WTC11 (cell line): ENCODE measurements at regions of chr16 and their contacts with region 1.

Region 1: DNA sequence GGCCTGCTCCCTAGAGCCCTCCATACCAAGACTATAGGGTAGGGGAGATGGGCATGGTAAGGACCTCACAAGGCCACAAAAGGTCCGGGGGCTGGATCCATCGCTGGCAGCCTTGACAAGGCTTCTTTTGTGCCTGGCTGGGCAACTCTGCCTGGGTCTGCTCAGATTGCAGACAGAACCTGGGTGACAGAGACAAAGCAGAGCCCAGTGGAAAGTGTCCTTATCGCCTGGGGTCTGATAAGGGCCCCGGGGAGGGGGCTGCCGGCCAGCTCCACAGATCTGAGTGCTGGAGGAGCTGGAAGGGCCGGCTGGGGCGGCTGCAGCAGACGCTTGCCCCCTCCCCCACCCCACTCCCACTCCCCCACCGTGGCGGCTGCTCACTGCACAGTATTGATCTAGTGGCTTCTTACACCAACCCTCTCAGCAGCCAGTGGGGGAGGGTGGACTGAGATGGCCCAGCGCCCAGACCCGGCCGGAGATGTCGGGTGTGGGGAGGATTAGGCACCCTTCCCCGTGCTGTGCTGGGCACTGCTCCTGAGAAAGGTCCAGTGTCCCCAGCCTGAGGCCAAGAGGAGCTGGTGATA is 7.2 kb downstream of the MMP15 start:
- DNase-seq: no peak
- ATAC-seq: peak; percentile 2; the same call in 1 of the 2 replicates
- H3K4me3 Mint-ChIP-seq: no peak overlapping the region
- H3K27ac Mint-ChIP-seq: no peak overlapping the region
- H3K4me1 Mint-ChIP-seq: peaks cover 37% of the 10 kb centered on the region
- H3K27me3 Mint-ChIP-seq: no peaks in the 10 kb centered on the region
- CTCF ChIP-seq: no peak

Region 2: DNA sequence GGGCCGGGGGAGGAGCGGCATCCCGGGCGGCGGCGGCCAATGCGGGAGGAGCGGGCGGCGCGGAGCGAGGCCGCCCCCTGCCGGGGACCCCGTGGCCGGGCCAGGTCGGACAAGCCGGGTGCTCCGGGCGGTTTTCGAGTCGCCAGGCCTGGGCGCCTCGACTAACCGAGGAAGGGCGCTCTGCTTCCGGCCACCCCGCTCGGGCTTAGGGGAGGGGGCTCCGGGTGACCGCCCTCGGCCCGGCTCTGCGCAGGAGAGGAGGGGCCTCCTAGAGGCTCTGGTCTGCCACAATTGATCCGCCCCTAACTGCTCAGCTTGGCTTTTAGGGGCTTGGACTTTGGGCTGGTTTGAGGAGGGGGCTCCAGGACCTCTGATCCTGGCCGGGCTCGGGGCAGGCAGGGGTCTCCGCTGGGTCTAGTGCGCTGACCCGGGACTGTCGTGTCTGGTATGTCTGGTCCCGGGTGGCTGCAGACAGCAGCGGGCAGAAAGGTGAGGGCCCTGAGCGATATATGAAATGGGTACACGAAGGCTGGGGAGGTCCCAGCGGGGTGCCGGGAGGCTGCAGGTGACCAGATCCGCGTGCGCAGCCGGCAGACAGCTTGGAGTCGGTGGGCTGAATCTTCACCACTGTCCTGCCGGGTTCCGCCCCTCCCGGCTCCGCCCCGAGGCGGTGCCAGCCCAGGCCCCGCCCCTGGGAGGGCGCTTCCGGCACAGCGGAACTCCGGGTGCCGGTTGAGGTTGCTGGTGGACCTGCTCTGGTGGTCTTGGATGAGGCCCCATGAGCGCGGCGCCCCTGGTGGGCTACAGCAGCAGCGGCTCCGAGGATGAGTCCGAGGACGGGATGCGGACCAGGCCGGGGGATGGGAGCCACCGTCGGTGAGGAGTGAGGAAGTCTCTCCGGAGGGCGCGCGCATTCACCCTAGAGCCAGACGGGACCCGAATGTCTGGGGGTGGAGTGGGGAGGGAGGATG is 31.8 kb before region 1 on chr16 and contains the start of gene USB1:
- CTCF ChIA-PET with region 1: interaction called, 12 read pairs
- POLR2A ChIA-PET with region 1: interaction called, 3 read pairs
- DNase-seq: peak; percentile 87
- ATAC-seq: peak; percentile 85
- H3K4me3 Mint-ChIP-seq: peak within 1 kb of the TSS; percentile 83
- H3K27ac Mint-ChIP-seq: peak within 1 kb of the TSS; percentile 70
- H3K4me1 Mint-ChIP-seq: peaks cover 23% of the 10 kb centered on the region
- H3K27me3 Mint-ChIP-seq: no peaks in the 10 kb centered on the region
- CTCF ChIP-seq: no peak; the same call in 1 of the 2 replicates
- total RNA-seq, gene USB1: 67.1 to 75.2 TPM (median 69.6 TPM) in 3 replicates

Region 3: DNA sequence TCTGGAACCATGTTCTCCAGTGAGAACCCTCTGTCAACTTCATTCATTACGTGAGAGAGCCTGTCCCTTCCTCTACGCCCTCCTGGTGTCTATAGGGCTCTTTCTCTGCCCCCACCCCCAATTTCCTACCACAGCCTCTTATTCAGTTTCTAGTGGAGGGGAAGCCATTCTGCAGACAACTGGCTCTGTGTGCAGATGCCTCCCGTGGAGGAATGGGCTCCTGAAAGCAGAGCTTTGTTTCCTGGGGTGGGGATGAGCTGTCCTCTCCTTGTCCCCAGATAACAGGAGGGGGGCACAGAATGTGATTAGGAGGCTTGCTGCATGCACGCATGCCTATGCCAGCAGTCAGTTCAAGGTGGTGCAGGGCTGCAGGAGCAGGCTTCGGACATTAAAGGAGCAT is 24.3 kb after region 1 on chr16:
- CTCF ChIA-PET with region 1: interaction called, 11 read pairs
- POLR2A ChIA-PET with region 1: no interaction called
- DNase-seq: no peak
- ATAC-seq: no peak
- H3K4me3 Mint-ChIP-seq: no peak overlapping the region
- H3K27ac Mint-ChIP-seq: no peak overlapping the region
- H3K4me1 Mint-ChIP-seq: no peaks in the 10 kb centered on the region
- H3K27me3 Mint-ChIP-seq: no peaks in the 10 kb centered on the region
- CTCF ChIP-seq: no peak

Region 4: DNA sequence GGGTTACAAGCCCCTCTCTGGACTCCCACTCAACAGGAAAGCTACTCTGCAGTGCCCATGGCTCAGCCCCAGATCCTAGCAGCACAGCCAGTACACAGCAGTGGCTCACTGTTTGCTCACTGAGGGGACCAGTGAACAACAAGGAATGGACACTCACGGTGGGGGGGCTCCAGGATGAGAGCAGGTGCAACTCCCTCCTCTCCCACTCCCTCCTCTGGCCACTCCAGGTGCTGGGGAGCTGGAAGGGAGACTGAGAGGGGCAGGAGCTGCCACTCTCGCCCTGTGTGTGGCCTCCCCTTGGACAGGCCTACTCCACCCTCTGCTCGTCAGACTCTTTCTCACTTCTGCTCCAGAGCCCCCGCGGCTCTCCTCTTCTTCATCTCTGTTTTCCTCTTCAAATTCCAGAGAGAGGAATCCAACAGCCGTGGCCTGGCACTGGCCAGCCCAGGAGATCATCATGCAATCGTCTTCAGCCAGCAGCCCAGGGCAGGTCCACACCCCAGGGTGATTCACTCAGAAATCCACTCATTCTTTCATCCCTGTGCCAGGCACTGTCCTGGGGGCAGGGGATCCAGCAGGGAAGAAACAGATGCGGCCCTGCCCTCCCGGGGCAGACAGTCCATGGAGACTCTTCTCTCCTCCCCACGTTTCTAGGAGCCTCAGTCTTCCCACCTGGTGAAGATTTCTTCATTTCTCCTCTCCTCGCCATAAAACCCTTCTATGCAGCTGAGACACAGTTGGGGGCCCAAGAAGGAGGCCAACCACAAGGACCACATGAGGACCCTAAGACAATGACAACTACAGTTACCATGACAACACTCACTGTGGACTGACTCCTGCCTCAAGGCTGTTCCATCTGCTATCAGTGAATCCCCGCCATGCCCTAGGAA is 65.7 kb after region 1 on chr16:
- CTCF ChIA-PET with region 1: interaction called, 33 read pairs
- POLR2A ChIA-PET with region 1: interaction called, 4 read pairs
- DNase-seq: no peak
- ATAC-seq: no peak
- H3K4me3 Mint-ChIP-seq: no peak overlapping the region
- H3K27ac Mint-ChIP-seq: no peak overlapping the region
- H3K4me1 Mint-ChIP-seq: peaks cover 19% of the 10 kb centered on the region
- H3K27me3 Mint-ChIP-seq: peaks cover 2% of the 10 kb centered on the region
- CTCF ChIP-seq: no peak

Region 5: DNA sequence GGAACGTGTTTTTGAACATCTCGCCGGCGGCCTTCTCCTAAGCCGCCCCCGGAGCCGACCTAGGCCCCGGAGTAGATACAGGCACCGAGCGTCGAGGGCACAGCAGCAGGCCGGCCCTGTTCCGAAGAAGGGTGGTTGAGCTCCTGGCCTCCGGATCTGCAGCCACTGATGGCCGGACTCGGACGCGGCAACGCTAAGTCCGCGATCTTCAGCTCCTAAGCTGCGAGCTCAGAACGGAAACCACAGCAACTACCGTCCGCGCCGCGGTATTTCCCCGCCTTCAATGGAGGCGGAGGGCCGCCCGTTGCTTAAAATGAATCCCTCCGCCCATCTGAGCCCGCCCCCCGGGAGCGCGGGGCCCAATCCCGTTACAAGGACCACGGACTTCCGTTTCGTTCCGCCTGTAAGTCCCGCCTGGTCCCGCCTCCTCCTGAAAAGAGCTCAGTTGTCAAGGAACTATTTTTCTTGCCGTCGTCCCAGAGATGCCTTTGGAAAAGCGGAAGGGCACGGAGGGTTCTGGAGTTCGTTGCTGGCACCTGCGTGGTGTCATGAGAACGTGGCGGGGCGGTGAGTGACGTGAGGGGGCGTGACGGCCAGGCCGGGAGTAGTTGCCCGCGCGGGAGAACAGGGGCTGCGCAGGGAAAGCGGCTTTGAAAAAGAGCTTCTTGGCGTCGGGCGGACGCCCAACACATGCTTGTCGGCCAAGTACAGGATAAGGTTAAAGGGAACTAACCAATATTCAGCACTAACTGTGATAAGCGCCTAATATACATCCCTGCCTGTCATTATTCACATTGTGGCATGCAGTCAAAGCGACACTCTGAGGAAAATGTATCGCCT is 96.5 kb after region 1 on chr16 and contains the start of gene CFAP20:
- CTCF ChIA-PET with region 1: interaction called, 27 read pairs
- POLR2A ChIA-PET with region 1: interaction called, 29 read pairs
- DNase-seq: peak; percentile 97
- ATAC-seq: peak; percentile 94
- H3K4me3 Mint-ChIP-seq: peak within 1 kb of the TSS; percentile 87
- H3K27ac Mint-ChIP-seq: peak within 1 kb of the TSS; percentile 96
- H3K4me1 Mint-ChIP-seq: peaks cover 29% of the 10 kb centered on the region
- H3K27me3 Mint-ChIP-seq: no peaks in the 10 kb centered on the region; the same call in 1 of the 2 replicates
- CTCF ChIP-seq: no peak
- total RNA-seq, gene CFAP20: 41.9 to 46.9 TPM (median 42.4 TPM) in 3 replicates